Dorsolateral prefrontal cortex (tissue), 120 donors: ENCODE measurements at regions of chr19 and their contacts with region 1.

Region 1: GRCh38 chr19:49085020-49085867 is at the start of gene SNRNP70:
- DNase-seq: peak; percentile 96 to 98 (median 97)
- H3K4me3 ChIP-seq: peak within 1 kb of the TSS; percentile 60 to 100 (median 95)
- H3K27ac ChIP-seq: peak within 1 kb of the TSS; percentile 66 to 98 (median 93)
- H3K27me3 ChIP-seq: no peaks in the 10 kb centered on the region
- CTCF ChIP-seq: peak in 33 of 56 donors; percentile 3 to 63 (median 23)
- total RNA-seq, gene SNRNP70: 217 to 495 (median 342) TPM

Region 2: DNA sequence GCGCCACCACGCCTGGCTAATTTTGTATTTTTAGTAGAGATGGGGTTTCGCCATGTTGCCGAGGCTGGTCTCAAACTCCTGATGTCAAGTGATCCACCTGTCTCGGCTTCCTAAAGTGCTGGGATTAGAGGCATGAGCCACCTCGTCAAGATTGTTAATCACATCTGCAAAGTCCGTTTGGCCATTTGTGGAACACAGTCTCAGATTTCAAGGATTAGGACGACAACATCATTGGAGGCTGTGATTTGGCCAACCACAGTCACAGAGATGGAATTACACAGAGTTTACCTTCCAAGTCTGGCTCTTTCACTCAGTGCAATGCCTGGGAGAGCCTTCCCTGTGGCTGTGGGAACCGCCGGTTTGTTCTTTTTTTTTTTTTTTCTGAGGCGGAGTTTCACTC is 515.4 kb before region 1 on chr19:
- intact Hi-C with region 1: no loop called
- DNase-seq: no peak
- H3K4me3 ChIP-seq: no peak overlapping the region
- H3K27ac ChIP-seq: no peak overlapping the region
- H3K27me3 ChIP-seq: peaks cover 0 to 6% (median 0%) of the 10 kb centered on the region in 45 donors
- CTCF ChIP-seq: no peak

Region 3: DNA sequence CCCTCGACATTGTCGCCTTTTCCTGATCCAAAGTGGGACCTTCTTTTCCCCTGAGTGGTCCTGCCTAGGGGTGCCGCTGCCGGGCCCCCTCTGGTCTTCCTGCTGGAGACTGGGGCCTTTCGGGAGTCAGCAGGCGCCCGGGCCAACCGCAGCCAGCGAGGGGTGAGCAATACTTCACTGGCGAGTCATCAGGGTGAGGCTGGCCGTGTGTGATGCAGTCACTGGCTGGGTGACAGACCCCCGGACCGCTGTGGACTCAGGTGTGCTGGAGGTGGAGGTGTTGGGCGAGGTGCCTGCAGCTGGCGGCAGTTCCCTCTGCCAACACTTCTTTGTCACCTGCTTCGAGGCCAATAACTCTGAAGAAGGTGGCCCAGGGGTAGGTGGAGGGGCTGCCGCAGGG is 43.1 kb before region 1 on chr19:
- intact Hi-C with region 1: no loop called
- DNase-seq: no peak
- H3K4me3 ChIP-seq: no peak overlapping the region
- H3K27ac ChIP-seq: no peak overlapping the region
- H3K27me3 ChIP-seq: no peaks in the 10 kb centered on the region
- CTCF ChIP-seq: no peak

Region 4: GRCh38 chr19:49118565-49119410 is 33.5 kb after region 1 on chr19 and contains the start of gene C19orf73:
- intact Hi-C with region 1: loop called in 1 of 2 experiments (anchors 2 kb)
- DNase-seq: peak; percentile 90 to 99 (median 96)
- H3K4me3 ChIP-seq: peak within 1 kb of the TSS; percentile 56 to 93 (median 78)
- H3K27ac ChIP-seq: peak within 1 kb of the TSS; percentile 78 to 99 (median 97)
- H3K27me3 ChIP-seq: no peaks in the 10 kb centered on the region
- CTCF ChIP-seq: peak in 29 of 56 donors; percentile 1 to 58 (median 24)
- total RNA-seq, gene C19orf73: 1.5 to 6.6 (median 3.2) TPM in 119 of 120 experiments, not detected in the other

Region 5: DNA sequence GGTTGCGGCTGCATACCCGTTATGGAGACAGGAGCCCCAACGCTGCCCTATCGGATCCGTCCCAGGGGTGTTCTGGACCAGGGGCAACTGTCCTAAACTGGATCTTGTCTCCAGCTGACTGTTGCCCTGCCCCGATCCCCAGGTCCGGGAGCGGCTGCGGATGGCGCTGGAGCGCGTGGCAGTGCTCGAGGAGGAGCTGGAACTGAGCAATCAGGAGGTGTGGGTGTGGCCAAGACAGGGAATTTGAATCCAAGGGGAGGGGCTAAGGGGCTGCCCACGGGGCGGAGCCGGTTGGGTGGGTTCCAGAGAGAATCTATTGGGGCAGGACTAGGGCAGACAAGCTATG is 44.0 kb after region 1 on chr19:
- intact Hi-C with region 1: no loop called
- DNase-seq: no peak
- H3K4me3 ChIP-seq: no peak overlapping the region
- H3K27ac ChIP-seq: no peak overlapping the region
- H3K27me3 ChIP-seq: no peaks in the 10 kb centered on the region
- CTCF ChIP-seq: no peak